Heart left ventricle (tissue), 16 donors: ENCODE measurements at regions of chr7 and their contacts with region 1.

Region 1: GRCh38 chr7:112414855-112415490 is 35.3 kb upstream of the IFRD1 start:
- DNase-seq: no peak
- ATAC-seq: peak in 3 of 4 donors; percentile 54 to 62 (median 60)
- H3K4me3 ChIP-seq: no peak overlapping the region
- H3K27ac ChIP-seq: no peak overlapping the region
- H3K4me1 ChIP-seq: peaks cover 0 to 8% (median 0%) of the 10 kb centered on the region in 12 donors
- H3K27me3 ChIP-seq: no peaks in the 10 kb centered on the region
- CTCF ChIP-seq: peak; percentile 36 to 66 (median 51)
- POLR2A ChIP-seq: no peak

Region 2: GRCh38 chr7:111752022-111752582 is 662.9 kb before region 1 on chr7:
- intact Hi-C with region 1: loop called in 6 of 10 experiments (anchors 2 to 10 kb)
- DNase-seq: peak; percentile 37 to 71 (median 44)
- ATAC-seq: peak in 3 of 4 donors; percentile 50 to 56 (median 56)
- H3K4me3 ChIP-seq: no peak overlapping the region
- H3K27ac ChIP-seq: no peak overlapping the region
- H3K4me1 ChIP-seq: peaks cover 0 to under 1% (median 0%) of the 10 kb centered on the region in 12 donors
- H3K27me3 ChIP-seq: no peaks in the 10 kb centered on the region
- CTCF ChIP-seq: peak; percentile 63 to 81 (median 75)
- POLR2A ChIP-seq: no peak

Region 3: GRCh38 chr7:111931016-111931517 is 483.9 kb before region 1 on chr7:
- intact Hi-C with region 1: loop called in 1 of 10 experiments (anchors 10 kb)
- DNase-seq: no peak
- ATAC-seq: peak in 3 of 4 donors; percentile 59 to 80 (median 68)
- H3K4me3 ChIP-seq: no peak overlapping the region
- H3K27ac ChIP-seq: peak overlapping the region in 9 of 12 donors; percentile 4 to 73 (median 42)
- H3K4me1 ChIP-seq: peaks cover 0 to 10% (median 2%) of the 10 kb centered on the region in 12 donors
- H3K27me3 ChIP-seq: no peaks in the 10 kb centered on the region
- CTCF ChIP-seq: no peak
- POLR2A ChIP-seq: no peak

Region 4: DNA sequence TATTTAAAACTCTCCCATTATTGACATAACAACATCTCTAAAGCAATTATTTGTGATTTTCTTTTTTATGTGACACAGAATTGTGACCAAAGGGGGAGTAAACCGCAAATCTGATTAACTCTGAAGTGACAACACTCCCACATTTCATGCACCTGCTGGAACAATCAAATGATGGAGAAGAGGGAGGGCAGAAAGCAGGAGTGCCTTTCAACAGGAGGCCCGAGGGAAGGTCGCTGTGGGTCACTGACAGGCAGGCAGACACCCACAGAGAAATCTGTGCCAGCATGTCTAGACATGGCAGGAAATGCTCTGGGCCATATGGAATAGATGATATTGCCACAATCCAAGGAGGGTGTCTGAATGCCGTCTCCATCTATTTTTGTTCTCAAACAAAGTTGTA is 456.1 kb before region 1 on chr7:
- intact Hi-C with region 1: loop called in 6 of 10 experiments (anchors 5 to 10 kb)
- DNase-seq: no peak
- ATAC-seq: no peak
- H3K4me3 ChIP-seq: no peak overlapping the region
- H3K27ac ChIP-seq: no peak overlapping the region
- H3K4me1 ChIP-seq: peaks cover 0 to 43% (median 22%) of the 10 kb centered on the region in 12 donors
- H3K27me3 ChIP-seq: no peaks in the 10 kb centered on the region
- CTCF ChIP-seq: no peak
- POLR2A ChIP-seq: no peak

Region 5: DNA sequence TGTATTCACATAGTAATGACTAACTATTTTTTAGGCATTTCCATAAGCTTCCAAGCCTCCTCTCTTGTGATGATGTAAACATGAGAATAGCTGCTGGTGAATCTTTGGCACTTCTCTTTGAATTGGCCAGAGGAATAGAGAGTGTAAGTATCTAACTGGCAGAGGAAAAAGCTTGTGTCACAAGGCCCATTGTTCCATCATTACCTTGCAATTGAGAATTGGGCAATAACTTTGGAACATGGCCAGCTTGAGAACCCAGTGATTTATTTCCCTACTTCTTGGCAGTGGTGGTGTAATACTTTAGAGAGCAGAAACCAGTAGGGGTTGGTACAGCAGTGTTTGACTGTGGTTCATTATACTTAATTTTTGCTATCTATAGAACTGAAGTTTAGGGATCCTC is 47.3 kb after region 1 on chr7:
- intact Hi-C with region 1: no loop called
- DNase-seq: peak in 3 of 5 donors; percentile 35 to 47 (median 46)
- ATAC-seq: peak; percentile 73 to 95 (median 86)
- H3K4me3 ChIP-seq: no peak overlapping the region
- H3K27ac ChIP-seq: peak overlapping the region in 11 of 12 donors; percentile 6 to 67 (median 18)
- H3K4me1 ChIP-seq: peaks cover 3 to 43% (median 18%) of the 10 kb centered on the region in 12 donors
- H3K27me3 ChIP-seq: no peaks in the 10 kb centered on the region
- CTCF ChIP-seq: no peak
- POLR2A ChIP-seq: no peak

Region 6: GRCh38 chr7:112770084-112770483 is 355.1 kb after region 1 on chr7:
- intact Hi-C with region 1: no loop called
- DNase-seq: no peak
- ATAC-seq: no peak
- H3K4me3 ChIP-seq: no peak overlapping the region
- H3K27ac ChIP-seq: no peak overlapping the region
- H3K4me1 ChIP-seq: peaks cover 0 to 10% (median 0%) of the 10 kb centered on the region in 12 donors
- H3K27me3 ChIP-seq: no peaks in the 10 kb centered on the region
- CTCF ChIP-seq: no peak
- POLR2A ChIP-seq: no peak